Activated CD4-positive, alpha-beta memory T cell treated with anti-CD3 and anti-CD28 coated beads for 36 hours (primary cell): ENCODE measurements at regions of chr4 and their contacts with region 1.

Region 1: DNA sequence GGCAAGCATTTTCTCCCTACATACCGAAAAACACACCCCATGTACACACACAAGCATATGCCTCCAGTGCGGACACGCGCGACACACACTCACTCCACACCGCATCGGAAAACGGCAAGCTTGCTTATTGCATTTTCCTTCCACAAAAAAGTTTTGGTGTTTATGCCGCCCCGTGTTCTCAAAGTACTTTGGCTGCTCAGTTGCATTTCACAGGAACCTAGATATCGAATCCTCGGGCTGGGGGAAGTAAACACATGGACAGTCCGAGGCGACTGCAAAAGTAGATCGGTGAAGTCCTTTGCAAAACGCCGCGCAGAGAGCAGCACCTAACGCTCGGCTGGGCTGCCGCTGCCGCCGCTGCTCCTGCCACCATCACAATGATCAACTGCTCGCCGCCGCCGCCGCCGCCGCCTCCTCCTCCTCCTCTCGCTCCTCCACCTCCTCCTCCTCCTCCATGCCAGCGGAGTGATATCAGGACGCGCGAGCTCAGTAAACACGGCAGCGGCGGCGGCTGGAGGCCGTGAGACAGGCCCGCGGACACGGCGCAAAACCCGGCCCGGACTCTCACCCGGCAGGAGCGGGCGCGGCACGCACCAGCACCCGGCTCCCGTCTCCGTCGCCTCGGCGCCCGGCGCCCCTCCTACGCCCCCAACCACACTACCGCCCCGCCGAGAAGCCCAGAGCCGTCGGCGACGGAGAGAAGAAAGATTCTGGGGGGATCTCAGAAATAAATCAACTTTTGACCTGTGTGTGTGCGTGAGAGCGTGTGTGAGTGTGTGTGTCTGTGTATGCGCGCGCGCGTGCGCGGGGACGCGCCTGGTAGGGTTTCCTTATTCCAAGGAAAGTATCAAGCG is at the start of gene MAML3:
- DNase-seq: peak; percentile 88
- H3K4me3 Mint-ChIP-seq: peak within 1 kb of the TSS; percentile 78
- H3K27ac Mint-ChIP-seq: no peak within 1 kb of the TSS
- H3K4me1 Mint-ChIP-seq: peaks cover 45% of the 10 kb centered on the region
- H3K27me3 Mint-ChIP-seq: peaks cover 20% of the 10 kb centered on the region
- total RNA-seq, gene MAML3: 0.51 to 0.76 TPM

Region 2: GRCh38 chr4:139177868-139178611 is 975.9 kb before region 1 on chr4:
- CTCF ChIA-PET with region 1: no interaction called
- POLR2A ChIA-PET with region 1: no interaction called
- intact Hi-C with region 1: loop called (anchors 5 kb)
- DNase-seq: peak; percentile 95
- H3K4me3 Mint-ChIP-seq: peak overlapping the region; percentile 80
- H3K27ac Mint-ChIP-seq: peak overlapping the region; percentile 78
- H3K4me1 Mint-ChIP-seq: peaks cover 22% of the 10 kb centered on the region
- H3K27me3 Mint-ChIP-seq: peaks cover 4% of the 10 kb centered on the region

Region 3: GRCh38 chr4:139734875-139735380 is 419.0 kb before region 1 on chr4:
- CTCF ChIA-PET with region 1: no interaction called
- POLR2A ChIA-PET with region 1: no interaction called
- intact Hi-C with region 1: loop called (anchors 5 kb)
- DNase-seq: peak; percentile 73
- H3K4me3 Mint-ChIP-seq: peak overlapping the region; percentile 46
- H3K27ac Mint-ChIP-seq: no peak overlapping the region
- H3K4me1 Mint-ChIP-seq: peaks cover 16% of the 10 kb centered on the region
- H3K27me3 Mint-ChIP-seq: peaks cover 40% of the 10 kb centered on the region

Region 4: DNA sequence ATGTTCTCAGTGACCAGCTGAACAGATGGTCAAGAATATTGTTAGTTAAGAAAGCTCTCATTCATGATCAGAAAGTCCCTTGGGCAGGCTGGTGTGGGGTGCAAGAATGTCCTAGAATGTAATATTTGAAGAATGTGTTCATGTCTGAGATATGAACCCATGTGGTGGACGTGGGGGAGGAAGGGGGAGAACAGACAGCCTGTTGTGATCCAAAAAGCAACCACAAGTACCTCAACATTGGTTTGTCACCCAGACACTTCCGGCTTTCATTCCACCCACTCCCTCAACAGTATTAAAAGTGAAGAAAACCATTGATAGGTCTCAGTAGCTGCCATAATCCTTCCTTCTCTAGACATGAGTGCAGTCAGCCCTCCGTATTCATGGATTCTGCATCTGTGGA is 82.1 kb before region 1 on chr4:
- CTCF ChIA-PET with region 1: interaction called, 3 read pairs
- POLR2A ChIA-PET with region 1: no interaction called
- intact Hi-C with region 1: loop called (anchors 1 kb)
- DNase-seq: peak; percentile 85
- H3K4me3 Mint-ChIP-seq: no peak overlapping the region
- H3K27ac Mint-ChIP-seq: peak overlapping the region; percentile 60
- H3K4me1 Mint-ChIP-seq: peaks cover 29% of the 10 kb centered on the region
- H3K27me3 Mint-ChIP-seq: peaks cover 28% of the 10 kb centered on the region

Region 5: GRCh38 chr4:140116442-140117104 is 37.4 kb before region 1 on chr4:
- CTCF ChIA-PET with region 1: no interaction called
- POLR2A ChIA-PET with region 1: no interaction called
- intact Hi-C with region 1: loop called (anchors 1 kb)
- DNase-seq: peak; percentile 49
- H3K4me3 Mint-ChIP-seq: no peak overlapping the region
- H3K27ac Mint-ChIP-seq: peak overlapping the region; percentile 14
- H3K4me1 Mint-ChIP-seq: peaks cover 17% of the 10 kb centered on the region
- H3K27me3 Mint-ChIP-seq: peaks cover 7% of the 10 kb centered on the region